Right ventricle myocardium inferior (tissue), 1 donor: ENCODE measurements at regions of chr3 and their contacts with region 1.

Region 1: DNA sequence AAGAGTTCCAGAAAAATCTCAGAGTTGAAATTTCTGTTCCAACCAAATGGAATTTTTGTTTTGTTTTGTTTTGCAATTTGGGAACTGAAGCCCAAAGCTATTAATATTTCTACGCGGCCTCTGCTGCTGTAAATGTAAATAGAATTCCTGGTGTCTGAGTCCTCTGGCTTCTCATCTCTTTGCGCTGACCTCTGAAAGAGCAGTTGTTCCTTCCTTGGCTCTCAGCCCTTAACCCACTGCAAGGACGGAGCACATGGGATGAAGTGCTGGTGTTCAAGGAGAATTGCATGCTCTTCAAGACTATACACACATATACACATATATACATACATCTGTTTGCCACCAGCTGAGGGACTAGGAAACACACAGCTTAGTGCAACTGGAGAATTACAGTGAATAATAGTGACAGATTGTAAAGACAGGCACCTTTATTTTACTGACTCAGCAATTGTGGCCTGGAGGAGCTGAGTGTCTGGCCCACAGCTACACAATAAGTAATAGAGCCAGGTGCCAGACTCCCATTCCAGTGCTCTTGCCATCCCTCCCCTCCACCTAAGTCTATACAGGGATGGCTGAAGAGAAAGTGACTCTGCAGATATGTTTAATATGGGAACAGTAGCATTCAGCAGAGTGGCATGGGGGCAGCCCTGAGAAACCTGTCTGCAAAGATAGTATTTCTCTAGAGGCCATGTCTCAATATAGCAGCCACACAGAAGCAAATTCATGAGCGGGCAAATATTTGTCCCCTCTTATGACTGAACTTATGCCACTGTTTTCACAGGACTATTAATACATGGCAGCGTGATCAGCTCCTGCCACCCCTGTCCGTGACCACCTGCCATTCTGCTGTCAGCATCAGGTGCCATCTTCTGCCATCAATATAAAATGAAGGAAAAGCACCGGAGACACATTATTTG is 42.3 kb downstream of the NEK10 start:
- DNase-seq: no peak
- ATAC-seq: peak; percentile 78

Region 2: DNA sequence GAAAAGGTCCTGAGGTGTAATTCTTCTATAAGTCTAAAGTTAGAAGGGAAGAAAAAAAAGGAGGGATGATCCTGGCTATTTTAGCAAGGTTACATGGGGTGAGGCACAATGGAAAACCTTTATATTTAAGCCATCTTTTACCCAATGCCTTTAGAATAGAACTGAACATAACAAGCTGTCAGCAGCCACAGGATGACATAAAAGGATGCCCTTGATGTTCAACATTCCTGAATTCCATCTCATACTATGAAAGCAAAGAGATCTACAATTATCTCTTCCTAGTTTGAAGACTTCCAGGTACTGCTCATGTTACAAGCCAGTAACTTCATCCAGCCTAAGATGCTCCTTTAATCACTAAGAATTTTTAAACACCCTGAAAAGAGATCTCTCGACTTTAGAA is 15.4 kb after region 1 on chr3:
- intact Hi-C with region 1: loop called (anchors 2 kb)
- DNase-seq: no peak
- ATAC-seq: peak; percentile 43

Region 3: DNA sequence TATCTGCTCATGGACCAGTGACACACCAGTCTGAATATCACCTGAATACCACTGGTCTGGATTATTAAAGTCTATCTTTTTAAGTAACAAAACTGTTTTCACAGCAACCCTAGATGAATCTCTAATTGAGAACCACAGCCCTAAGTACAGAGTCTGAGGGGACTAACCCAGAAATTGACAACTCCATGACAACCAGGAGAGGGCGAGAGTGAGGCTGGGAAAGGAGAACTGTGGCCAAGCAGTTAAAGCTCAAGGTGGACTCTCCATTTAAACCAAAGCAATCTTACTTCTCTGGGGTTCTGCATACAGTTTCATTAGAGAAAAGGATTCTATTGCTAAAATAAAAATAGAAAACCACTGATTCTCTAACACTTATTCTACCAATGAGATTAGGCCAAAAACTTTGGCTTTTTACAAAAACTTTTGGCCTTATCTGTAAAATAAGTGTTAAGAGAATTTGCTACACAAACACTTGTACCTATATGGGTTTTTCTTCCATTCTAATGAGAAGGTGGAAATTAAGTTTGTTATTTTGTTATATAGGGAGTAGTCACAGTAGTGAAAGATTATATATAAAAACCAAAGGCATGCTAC is 30.9 kb after region 1 on chr3:
- intact Hi-C with region 1: no loop called
- DNase-seq: no peak
- ATAC-seq: peak; percentile 63